WTC11 (cell line): ENCODE measurements at regions of chr7 and their contacts with region 1.

Region 1: GRCh38 chr7:1175967-1176851 is 16.2 kb upstream of the ZFAND2A start:
- DNase-seq: peak; percentile 95
- ATAC-seq: peak; percentile 89
- H3K4me3 Mint-ChIP-seq: peak overlapping the region; percentile 33
- H3K27ac Mint-ChIP-seq: no peak overlapping the region; the same call in 1 of the 2 replicates
- H3K4me1 Mint-ChIP-seq: no peaks in the 10 kb centered on the region
- H3K27me3 Mint-ChIP-seq: peaks cover 12% of the 10 kb centered on the region
- CTCF ChIP-seq: peak; percentile 94

Region 2: GRCh38 chr7:1137510-1138167 is 38.6 kb before region 1 on chr7:
- CTCF ChIA-PET with region 1: interaction called, 19 read pairs
- POLR2A ChIA-PET with region 1: no interaction called
- DNase-seq: no peak
- ATAC-seq: peak; percentile 38
- H3K4me3 Mint-ChIP-seq: peak overlapping the region; percentile 93
- H3K27ac Mint-ChIP-seq: peak overlapping the region; percentile 93; the same call in 1 of the 2 replicates
- H3K4me1 Mint-ChIP-seq: peaks cover 8% of the 10 kb centered on the region
- H3K27me3 Mint-ChIP-seq: peaks cover 2% of the 10 kb centered on the region; the same call in 1 of the 2 replicates
- CTCF ChIP-seq: no peak

Region 3: GRCh38 chr7:1187127-1187526 is 10.9 kb after region 1 on chr7:
- CTCF ChIA-PET with region 1: interaction called, 25 read pairs
- POLR2A ChIA-PET with region 1: no interaction called
- DNase-seq: no peak
- ATAC-seq: no peak
- H3K4me3 Mint-ChIP-seq: no peak overlapping the region
- H3K27ac Mint-ChIP-seq: no peak overlapping the region
- H3K4me1 Mint-ChIP-seq: no peaks in the 10 kb centered on the region
- H3K27me3 Mint-ChIP-seq: peaks cover 10% of the 10 kb centered on the region
- CTCF ChIP-seq: no peak

Region 4: DNA sequence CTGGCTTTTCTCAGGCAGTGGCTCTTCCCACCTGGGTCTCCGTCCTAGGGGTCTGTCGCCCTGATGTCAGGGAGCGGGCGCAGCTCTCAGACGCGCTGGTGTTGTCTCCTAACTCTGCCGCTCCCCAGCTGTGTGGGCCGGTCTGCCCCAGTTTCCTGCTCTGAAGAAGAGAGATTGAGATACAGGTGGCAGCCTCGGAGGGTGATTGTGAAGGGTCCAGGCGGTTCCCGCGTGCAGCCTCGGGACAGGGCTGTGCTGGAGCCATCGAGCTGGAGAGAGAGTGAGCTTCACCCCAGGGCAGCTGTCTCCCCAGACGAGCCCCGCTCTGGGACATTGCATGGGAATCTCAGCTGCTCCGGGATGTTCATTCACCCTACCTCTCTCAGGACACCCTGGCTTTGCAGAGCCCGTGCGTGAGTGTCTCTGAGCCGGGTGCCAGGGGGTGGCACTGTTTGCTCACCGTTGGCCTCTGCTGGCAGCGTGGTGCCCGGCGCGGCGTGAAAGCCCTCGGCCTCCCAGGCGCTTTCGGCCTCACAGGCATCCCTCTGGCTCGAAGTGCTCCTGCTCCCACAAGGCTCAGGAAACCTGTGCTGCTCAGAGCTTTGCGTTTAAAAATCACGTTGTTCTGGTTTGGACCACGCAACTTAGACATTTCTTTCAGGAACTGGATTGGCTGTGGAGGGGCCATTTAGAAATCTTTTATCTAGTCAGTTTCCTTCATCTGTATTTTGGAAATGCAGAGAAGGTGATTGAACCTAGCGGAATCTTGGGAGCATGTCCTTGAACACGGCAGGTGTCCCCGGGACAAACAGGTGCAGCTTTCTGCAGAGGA is 17.6 kb after region 1 on chr7:
- CTCF ChIA-PET with region 1: interaction called, 25 read pairs
- POLR2A ChIA-PET with region 1: no interaction called
- DNase-seq: peak; percentile 63
- ATAC-seq: peak; percentile 93
- H3K4me3 Mint-ChIP-seq: no peak overlapping the region
- H3K27ac Mint-ChIP-seq: no peak overlapping the region
- H3K4me1 Mint-ChIP-seq: no peaks in the 10 kb centered on the region
- H3K27me3 Mint-ChIP-seq: peaks cover 3% of the 10 kb centered on the region
- CTCF ChIP-seq: no peak

Region 5: DNA sequence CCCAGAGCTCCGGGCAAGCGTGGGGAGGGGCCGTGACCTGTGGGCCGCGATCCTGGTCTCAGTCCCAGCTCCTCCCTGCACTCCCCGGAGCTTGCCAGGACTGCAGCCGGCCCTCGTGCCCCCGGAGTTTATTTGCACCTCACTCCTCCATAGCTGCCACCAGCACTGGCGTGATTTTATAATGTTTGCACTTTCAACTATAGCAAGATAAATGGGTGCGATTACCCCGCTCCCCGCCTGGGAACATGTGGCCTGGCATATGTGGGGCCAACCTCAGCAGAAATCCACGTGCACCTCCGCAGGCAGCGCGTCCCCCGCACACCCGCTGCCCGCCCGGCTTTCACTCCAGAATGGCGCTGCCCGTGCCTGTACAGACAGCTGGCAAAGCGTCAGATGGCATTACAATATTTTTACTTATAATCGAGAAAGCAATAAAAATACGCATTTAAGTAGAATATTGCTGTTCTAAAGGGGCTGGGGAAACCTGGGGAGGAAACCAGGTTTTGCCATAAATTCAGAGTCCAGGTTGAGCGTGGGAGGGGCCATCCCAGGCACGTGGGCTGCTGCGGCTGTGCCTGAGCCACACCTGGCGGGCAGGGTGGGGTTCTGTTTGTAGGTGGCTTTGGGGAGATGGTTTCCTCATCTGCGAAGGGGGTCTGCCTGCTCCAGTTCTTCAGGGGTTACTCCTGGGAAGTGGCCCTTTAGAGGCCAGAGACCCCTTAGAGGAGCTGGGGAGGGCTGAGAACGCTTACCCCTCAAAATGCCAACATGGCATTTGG is 87.5 kb after region 1 on chr7:
- CTCF ChIA-PET with region 1: no interaction called
- POLR2A ChIA-PET with region 1: no interaction called
- DNase-seq: no peak
- ATAC-seq: no peak
- H3K4me3 Mint-ChIP-seq: no peak overlapping the region
- H3K27ac Mint-ChIP-seq: no peak overlapping the region
- H3K4me1 Mint-ChIP-seq: no peaks in the 10 kb centered on the region
- H3K27me3 Mint-ChIP-seq: no peaks in the 10 kb centered on the region
- CTCF ChIP-seq: no peak